Naive thymus-derived CD4-positive, alpha-beta T cell (primary cell): ENCODE measurements at regions of chr7 and their contacts with region 1.

Region 1: DNA sequence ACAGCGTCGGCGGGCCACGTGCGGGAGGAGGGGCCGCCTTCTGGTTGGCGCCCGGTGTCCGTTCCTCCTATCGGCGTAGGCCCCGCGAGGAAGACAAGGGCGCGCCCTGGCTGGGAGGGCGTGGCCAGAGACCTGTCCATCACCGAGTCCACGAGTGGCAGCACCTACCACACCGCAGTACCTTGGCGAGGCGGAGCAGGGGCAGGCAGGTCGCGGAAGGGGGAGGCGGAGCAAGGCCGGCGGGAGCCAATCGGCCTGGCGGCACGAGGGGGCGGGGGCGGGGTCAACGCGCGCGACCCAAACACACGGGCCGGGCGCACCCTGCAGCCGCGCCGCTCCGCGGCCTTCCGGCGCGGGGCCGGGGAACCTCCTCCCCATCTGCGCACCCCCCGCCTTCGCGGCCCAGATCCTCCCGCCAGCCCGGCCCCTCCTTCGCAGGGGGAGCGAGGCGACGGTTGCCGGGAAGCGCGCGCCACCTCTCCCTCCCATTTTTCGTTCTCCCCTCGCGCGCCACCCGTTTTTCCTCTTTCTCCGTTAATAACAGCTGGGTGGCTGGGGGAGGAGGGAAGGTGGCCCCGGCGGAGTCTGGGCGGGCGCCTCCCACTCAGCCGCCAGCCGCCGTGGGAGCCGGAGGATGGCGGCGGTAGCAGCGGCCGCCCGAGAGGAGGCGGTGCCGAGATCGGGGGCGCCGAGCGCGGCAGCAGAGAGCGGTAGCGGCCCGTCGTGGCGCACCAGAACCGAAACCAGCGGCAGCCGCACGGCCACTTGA is at the start of gene ZNRF2:
- DNase-seq: peak; percentile 93 to 99 (median 98)
- ATAC-seq: peak; percentile 92
- H3K4me3 ChIP-seq: peak within 1 kb of the TSS; percentile 58
- H3K4me3 Mint-ChIP-seq: peak within 1 kb of the TSS; percentile 83 to 99 (median 86)
- H3K27ac ChIP-seq: peak within 1 kb of the TSS; percentile 83
- H3K27ac Mint-ChIP-seq: peak within 1 kb of the TSS; percentile 83 to 94 (median 92)
- H3K4me1 ChIP-seq: peaks cover 3 to 23% of the 10 kb centered on the region in 2 donors
- H3K4me1 Mint-ChIP-seq: peaks cover 33 to 49% (median 43%) of the 10 kb centered on the region in 7 donors
- H3K27me3 ChIP-seq: no peaks in the 10 kb centered on the region
- H3K27me3 Mint-ChIP-seq: peaks cover 0 to 2% (median 0%) of the 10 kb centered on the region in 5 donors
- total RNA-seq, gene ZNRF2: 13.7 to 28.0 (median 24.4) TPM

Region 2: GRCh38 chr7:29900745-29901144 is 383.7 kb before region 1 on chr7:
- CTCF ChIA-PET with region 1: no interaction called
- POLR2A ChIA-PET with region 1: no interaction called
- intact Hi-C with region 1: no loop called
- DNase-seq: no peak
- ATAC-seq: peak; percentile 20
- H3K4me3 ChIP-seq: no peak overlapping the region
- H3K4me3 Mint-ChIP-seq: no peak overlapping the region
- H3K27ac ChIP-seq: no peak overlapping the region
- H3K27ac Mint-ChIP-seq: no peak overlapping the region
- H3K4me1 ChIP-seq: no peaks in the 10 kb centered on the region
- H3K4me1 Mint-ChIP-seq: peaks cover 0 to 6% (median 0%) of the 10 kb centered on the region in 7 donors
- H3K27me3 ChIP-seq: no peaks in the 10 kb centered on the region
- H3K27me3 Mint-ChIP-seq: peaks cover 3 to 40% (median 36%) of the 10 kb centered on the region in 5 donors

Region 3: DNA sequence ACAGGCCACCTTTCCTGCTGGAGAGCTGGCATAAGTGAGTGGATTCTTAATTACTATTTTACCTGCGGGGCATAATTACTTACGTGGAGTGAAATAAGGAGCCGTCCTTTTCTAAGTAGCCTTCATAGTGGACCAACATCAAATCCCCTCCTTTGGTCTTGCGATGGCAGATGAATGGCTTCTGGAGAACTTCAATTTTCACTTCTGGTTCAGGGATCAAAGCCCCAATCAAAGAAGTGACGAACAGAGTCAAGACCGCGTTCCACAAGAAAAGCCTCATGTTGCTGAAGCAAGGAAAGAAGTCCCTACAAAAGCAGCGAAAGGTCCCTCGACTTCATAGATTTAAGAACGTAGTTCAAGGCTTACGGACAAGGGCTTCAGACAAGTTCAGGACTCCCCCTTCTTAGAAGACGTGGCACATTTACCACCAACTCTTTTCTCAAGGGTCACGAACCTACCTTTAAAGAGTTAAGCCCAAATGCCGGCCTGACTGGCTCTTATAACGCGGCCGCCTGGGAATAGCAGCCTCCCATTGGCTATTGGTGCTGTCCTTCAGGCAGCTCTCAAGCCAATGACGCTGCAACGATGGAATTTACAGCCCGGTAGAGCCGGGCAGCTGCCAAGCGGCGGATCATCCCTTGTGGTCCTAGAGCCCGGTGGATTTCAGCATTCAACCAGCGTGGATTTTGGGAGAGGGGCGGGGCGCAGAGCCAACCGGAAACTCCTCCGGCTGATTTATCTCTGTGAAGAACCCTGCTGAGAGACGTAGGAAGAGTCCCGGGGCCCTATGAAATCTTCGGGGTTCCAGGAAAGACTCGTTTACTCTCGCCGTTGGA is 258.0 kb before region 1 on chr7 and contains the start of gene FKBP14:
- CTCF ChIA-PET with region 1: no interaction called
- POLR2A ChIA-PET with region 1: interaction called, 4 read pairs
- intact Hi-C with region 1: loop called (anchors 1 kb)
- DNase-seq: peak; percentile 70 to 93 (median 89)
- ATAC-seq: peak; percentile 91
- H3K4me3 ChIP-seq: peak within 1 kb of the TSS; percentile 79
- H3K4me3 Mint-ChIP-seq: peak within 1 kb of the TSS in 6 of 10 donors; percentile 85 to 98 (median 89)
- H3K27ac ChIP-seq: peak within 1 kb of the TSS; percentile 69
- H3K27ac Mint-ChIP-seq: peak within 1 kb of the TSS; percentile 74 to 94 (median 88)
- H3K4me1 ChIP-seq: peaks cover 6 to 20% of the 10 kb centered on the region in 2 donors
- H3K4me1 Mint-ChIP-seq: peaks cover 28 to 47% (median 40%) of the 10 kb centered on the region in 7 donors
- H3K27me3 ChIP-seq: no peaks in the 10 kb centered on the region
- H3K27me3 Mint-ChIP-seq: no peaks in the 10 kb centered on the region
- total RNA-seq, gene FKBP14: 4.0 to 6.5 (median 5.3) TPM

Region 4: GRCh38 chr7:30322271-30323005 is 38.0 kb after region 1 on chr7:
- CTCF ChIA-PET with region 1: interaction called, 3 read pairs
- POLR2A ChIA-PET with region 1: interaction called, 13 read pairs
- intact Hi-C with region 1: loop called (anchors 1 kb)
- DNase-seq: peak in 6 of 9 donors; percentile 9 to 48 (median 34)
- ATAC-seq: peak; percentile 86
- H3K4me3 ChIP-seq: peak overlapping the region; percentile 44
- H3K4me3 Mint-ChIP-seq: peak overlapping the region; percentile 72 to 92 (median 86)
- H3K27ac ChIP-seq: peak overlapping the region; percentile 75
- H3K27ac Mint-ChIP-seq: peak overlapping the region; percentile 88 to 97 (median 93)
- H3K4me1 ChIP-seq: peaks cover 20 to 26% of the 10 kb centered on the region in 2 donors
- H3K4me1 Mint-ChIP-seq: peaks cover 41 to 75% (median 71%) of the 10 kb centered on the region in 7 donors
- H3K27me3 ChIP-seq: no peaks in the 10 kb centered on the region
- H3K27me3 Mint-ChIP-seq: no peaks in the 10 kb centered on the region

Region 5: GRCh38 chr7:30412810-30413504 is 128.5 kb after region 1 on chr7:
- CTCF ChIA-PET with region 1: no interaction called
- POLR2A ChIA-PET with region 1: interaction called, 3 read pairs
- intact Hi-C with region 1: loop called in 1 of 2 experiments (anchors 2 kb)
- DNase-seq: peak in 3 of 9 donors; percentile 7 to 15 (median 8)
- ATAC-seq: peak; percentile 49
- H3K4me3 ChIP-seq: no peak overlapping the region
- H3K4me3 Mint-ChIP-seq: no peak overlapping the region
- H3K27ac ChIP-seq: no peak overlapping the region
- H3K27ac Mint-ChIP-seq: no peak overlapping the region
- H3K4me1 ChIP-seq: no peaks in the 10 kb centered on the region
- H3K4me1 Mint-ChIP-seq: peaks cover 0 to 6% (median 0%) of the 10 kb centered on the region in 7 donors
- H3K27me3 ChIP-seq: no peaks in the 10 kb centered on the region
- H3K27me3 Mint-ChIP-seq: no peaks in the 10 kb centered on the region

Region 6: GRCh38 chr7:30504347-30505173 is 220.1 kb after region 1 on chr7 and contains the start of gene GGCT:
- CTCF ChIA-PET with region 1: interaction called, 3 read pairs
- POLR2A ChIA-PET with region 1: interaction called, 3 read pairs
- intact Hi-C with region 1: loop called (anchors 1 kb)
- DNase-seq: peak; percentile 88 to 97 (median 95)
- ATAC-seq: peak; percentile 99
- H3K4me3 ChIP-seq: peak within 1 kb of the TSS; percentile 91
- H3K4me3 Mint-ChIP-seq: peak within 1 kb of the TSS; percentile 90 to 96 (median 95)
- H3K27ac ChIP-seq: peak within 1 kb of the TSS; percentile 72
- H3K27ac Mint-ChIP-seq: peak within 1 kb of the TSS; percentile 87 to 99 (median 91)
- H3K4me1 ChIP-seq: peaks cover 12% of the 10 kb centered on the region in 2 donors
- H3K4me1 Mint-ChIP-seq: peaks cover 19 to 51% (median 44%) of the 10 kb centered on the region in 7 donors
- H3K27me3 ChIP-seq: no peaks in the 10 kb centered on the region
- H3K27me3 Mint-ChIP-seq: no peaks in the 10 kb centered on the region
- total RNA-seq, gene GGCT: 9.5 to 39.2 (median 10.8) TPM

Region 7: GRCh38 chr7:30771174-30771879 is 486.8 kb after region 1 on chr7 and contains the start of gene MINDY4:
- CTCF ChIA-PET with region 1: no interaction called
- POLR2A ChIA-PET with region 1: no interaction called
- intact Hi-C with region 1: loop called in 1 of 2 experiments (anchors 1 kb)
- DNase-seq: peak; percentile 30 to 69 (median 52)
- ATAC-seq: peak; percentile 89
- H3K4me3 ChIP-seq: peak within 1 kb of the TSS; percentile 82
- H3K4me3 Mint-ChIP-seq: peak within 1 kb of the TSS; percentile 68 to 94 (median 88)
- H3K27ac ChIP-seq: peak within 1 kb of the TSS; percentile 71
- H3K27ac Mint-ChIP-seq: peak within 1 kb of the TSS; percentile 51 to 83 (median 70)
- H3K4me1 ChIP-seq: no peaks in the 10 kb centered on the region
- H3K4me1 Mint-ChIP-seq: peaks cover 0 to 12% (median 6%) of the 10 kb centered on the region in 7 donors
- H3K27me3 ChIP-seq: no peaks in the 10 kb centered on the region
- H3K27me3 Mint-ChIP-seq: peaks cover 0 to 9% (median 0%) of the 10 kb centered on the region in 5 donors
- total RNA-seq, gene MINDY4: 0.82 to 1.5 (median 0.94) TPM